Heart left ventricle (tissue), 16 donors: ENCODE measurements at regions of chr1 and their contacts with region 1.

Region 1: DNA sequence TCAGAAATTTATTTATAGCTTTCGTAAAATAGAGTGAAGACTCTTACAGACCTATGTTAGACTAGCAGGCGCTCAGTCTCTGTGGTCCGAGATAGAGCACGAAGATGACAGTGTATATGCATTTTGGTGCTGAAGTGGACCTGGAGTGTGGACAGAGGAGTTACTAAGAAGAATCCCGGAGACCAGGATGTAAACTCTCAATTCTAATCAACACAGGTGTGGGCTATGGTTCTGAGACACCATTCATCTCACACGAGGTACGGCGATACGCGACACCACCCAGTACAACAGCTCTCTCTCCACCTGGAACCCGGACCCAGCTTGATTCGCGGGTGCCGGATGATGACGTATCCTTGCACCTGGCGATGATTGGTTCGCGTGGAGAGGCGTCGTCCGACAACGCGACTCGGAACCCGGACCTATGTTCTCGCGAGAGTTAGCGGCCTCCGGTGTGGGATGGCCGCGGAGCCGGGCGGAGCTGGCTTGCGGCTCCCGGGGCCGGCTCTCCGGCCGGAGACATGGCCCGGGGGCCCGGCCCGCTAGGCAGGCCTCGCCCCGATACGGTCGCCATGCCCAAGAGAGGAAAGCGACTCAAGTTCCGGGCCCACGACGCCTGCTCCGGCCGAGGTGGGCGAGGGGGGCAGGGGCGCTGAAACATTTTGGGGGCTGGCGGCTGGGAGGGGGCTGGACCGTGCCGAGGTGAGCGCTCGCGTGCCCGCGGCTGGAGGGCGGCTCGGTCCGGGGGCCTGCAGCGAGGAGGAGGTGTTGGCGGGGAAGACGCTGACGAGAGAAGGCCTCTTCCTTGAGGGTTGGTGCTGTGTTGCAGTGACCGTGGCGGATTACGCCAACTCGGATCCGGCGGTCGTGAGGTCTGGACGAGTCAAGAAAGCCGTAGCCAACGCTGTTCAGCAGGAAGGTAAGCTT is at the start of gene TMEM183A:
- DNase-seq: peak; percentile 97 to 98 (median 97)
- ATAC-seq: peak; percentile 98 to 99 (median 98)
- H3K4me3 ChIP-seq: peak within 1 kb of the TSS; percentile 63 to 97 (median 84)
- H3K27ac ChIP-seq: peak within 1 kb of the TSS; percentile 52 to 94 (median 91)
- H3K4me1 ChIP-seq: peaks cover 0 to 32% (median 15%) of the 10 kb centered on the region in 12 donors
- H3K27me3 ChIP-seq: no peaks in the 10 kb centered on the region
- CTCF ChIP-seq: no peak
- POLR2A ChIP-seq: peak; percentile 80 to 96
- total RNA-seq, gene TMEM183A: 20.0 to 34.8 (median 29.9) TPM

Region 2: GRCh38 chr1:202968840-202969295 is 38.3 kb before region 1 on chr1:
- intact Hi-C with region 1: loop called in 1 of 10 experiments (anchors 5 kb)
- DNase-seq: peak in 4 of 5 donors; percentile 37 to 66 (median 55)
- ATAC-seq: peak in 3 of 4 donors; percentile 32 to 58 (median 36)
- H3K4me3 ChIP-seq: peak overlapping the region in 1 of 12 donors; percentile 71
- H3K27ac ChIP-seq: peak overlapping the region in 6 of 12 donors; percentile 26 to 99 (median 92)
- H3K4me1 ChIP-seq: peaks cover 0 to 41% (median 29%) of the 10 kb centered on the region in 12 donors
- H3K27me3 ChIP-seq: no peaks in the 10 kb centered on the region
- CTCF ChIP-seq: peak; percentile 27 to 76 (median 52)
- POLR2A ChIP-seq: no peak

Region 3: GRCh38 chr1:203026031-203026989 is 19.1 kb after region 1 on chr1 and contains the start of gene PPFIA4:
- intact Hi-C with region 1: loop called in 1 of 10 experiments (anchors 2 kb)
- DNase-seq: peak; percentile 86 to 94 (median 89)
- ATAC-seq: peak; percentile 29 to 89 (median 85)
- H3K4me3 ChIP-seq: peak within 1 kb of the TSS; percentile 49 to 83 (median 68)
- H3K27ac ChIP-seq: peak within 1 kb of the TSS in 11 of 12 donors; percentile 39 to 91 (median 67)
- H3K4me1 ChIP-seq: peaks cover 0 to 46% (median 19%) of the 10 kb centered on the region in 12 donors
- H3K27me3 ChIP-seq: peaks cover 0 to 8% (median 0%) of the 10 kb centered on the region in 9 donors
- CTCF ChIP-seq: peak in 2 of 12 donors; percentile 4 to 18
- POLR2A ChIP-seq: peak in 1 of 2 donors; percentile 16
- total RNA-seq, gene PPFIA4: 15.4 to 50.3 (median 36.9) TPM